Heart right ventricle (tissue), 16 donors: ENCODE measurements at regions of chr12 and their contacts with region 1.

Region 1: DNA sequence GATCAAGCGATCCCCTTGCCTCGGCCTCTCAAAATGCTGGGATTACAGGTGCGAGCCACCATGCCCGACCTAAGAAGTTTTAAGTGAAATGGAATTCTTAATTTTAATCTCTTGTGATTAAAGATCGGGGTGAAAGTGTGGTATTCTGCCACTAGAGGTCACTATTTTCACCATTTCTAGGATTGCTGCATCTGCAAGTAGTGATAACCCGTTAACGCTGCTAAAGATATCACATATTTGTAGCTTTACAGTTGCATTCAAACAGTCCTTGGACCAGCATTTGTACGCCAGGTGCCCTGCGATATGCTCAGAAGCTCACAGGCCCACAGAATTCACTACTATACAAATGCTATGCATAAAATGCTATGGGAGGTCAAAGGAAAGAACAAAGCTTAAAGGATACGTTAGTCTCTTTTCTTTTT is 19.3 kb downstream of the CCDC62 start:
- DNase-seq: no peak
- ATAC-seq: peak in 5 of 8 donors; percentile 44 to 63 (median 61)
- H3K4me3 ChIP-seq: no peak overlapping the region
- H3K27ac ChIP-seq: no peak overlapping the region
- H3K4me1 ChIP-seq: peaks cover 0 to 6% (median 0%) of the 10 kb centered on the region in 9 donors
- H3K27me3 ChIP-seq: no peaks in the 10 kb centered on the region
- CTCF ChIP-seq: peak; percentile 58 to 85 (median 74)

Region 2: GRCh38 chr12:122841544-122842321 is 48.0 kb after region 1 on chr12:
- intact Hi-C with region 1: loop called in 1 of 10 experiments (anchors 10 kb)
- DNase-seq: no peak
- ATAC-seq: peak; percentile 34 to 88 (median 75)
- H3K4me3 ChIP-seq: peak overlapping the region in 1 of 10 donors; percentile 6
- H3K27ac ChIP-seq: peak overlapping the region; percentile 77 to 98 (median 88)
- H3K4me1 ChIP-seq: peaks cover 6 to 64% (median 42%) of the 10 kb centered on the region in 9 donors
- H3K27me3 ChIP-seq: peaks cover 0 to 3% (median 0%) of the 10 kb centered on the region in 7 donors
- CTCF ChIP-seq: no peak

Region 3: GRCh38 chr12:122860346-122861090 is 66.8 kb after region 1 on chr12:
- intact Hi-C with region 1: loop called in 3 of 10 experiments (anchors 10 kb)
- DNase-seq: peak; percentile 87 to 90
- ATAC-seq: peak; percentile 59 to 87 (median 77)
- H3K4me3 ChIP-seq: no peak overlapping the region
- H3K27ac ChIP-seq: peak overlapping the region in 8 of 10 donors; percentile 45 to 76 (median 54)
- H3K4me1 ChIP-seq: peaks cover 3 to 54% (median 45%) of the 10 kb centered on the region in 9 donors
- H3K27me3 ChIP-seq: no peaks in the 10 kb centered on the region
- CTCF ChIP-seq: peak; percentile 84 to 95 (median 88)

Region 4: DNA sequence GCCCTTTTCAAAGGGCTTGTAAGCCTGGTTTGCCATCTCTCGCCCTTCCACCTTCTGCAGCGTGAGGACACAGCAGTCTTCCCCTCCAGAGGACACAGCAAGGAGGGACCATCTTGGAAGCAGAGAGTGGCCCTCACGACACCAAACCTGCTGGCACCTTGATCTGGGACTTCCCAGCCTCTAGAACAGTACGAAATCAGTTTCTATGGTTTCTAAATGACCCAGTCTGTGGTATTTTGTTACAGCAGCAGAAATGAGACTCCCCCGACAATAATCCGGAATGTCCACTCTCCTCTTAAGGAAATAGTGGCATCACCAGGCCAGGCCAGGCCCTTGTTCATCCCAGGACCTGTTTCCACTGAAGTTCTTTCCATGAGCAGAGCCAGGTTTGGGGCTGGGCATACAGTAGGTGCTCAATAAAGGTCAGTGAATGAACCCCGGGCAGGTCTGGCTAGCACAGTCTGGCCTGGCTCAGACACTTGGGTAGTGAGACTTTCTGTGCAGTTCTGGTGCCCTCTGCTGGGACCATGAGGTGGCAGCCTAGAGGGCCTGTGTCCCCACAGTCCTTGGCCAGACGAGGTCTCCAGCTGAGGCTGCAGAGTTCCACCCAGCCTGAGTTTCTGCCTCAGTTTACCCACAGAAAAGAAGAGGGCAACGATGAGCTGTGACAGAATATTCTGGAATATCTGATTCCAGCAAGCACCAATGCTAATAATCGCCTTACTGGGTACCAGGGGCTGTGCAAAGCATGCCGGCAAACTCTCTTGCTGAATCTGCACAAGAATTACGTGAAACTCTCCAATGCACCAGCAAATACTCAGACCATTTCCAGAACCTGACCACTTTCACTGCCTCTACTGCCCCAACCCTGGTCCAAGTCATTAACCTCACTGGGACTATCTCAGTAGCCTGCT is 158.5 kb after region 1 on chr12:
- intact Hi-C with region 1: loop called in 9 of 10 experiments (anchors 1 to 10 kb)
- DNase-seq: peak; percentile 73 to 78
- ATAC-seq: peak; percentile 91 to 95 (median 94)
- H3K4me3 ChIP-seq: no peak overlapping the region
- H3K27ac ChIP-seq: no peak overlapping the region
- H3K4me1 ChIP-seq: peaks cover 0 to 19% (median 10%) of the 10 kb centered on the region in 9 donors
- H3K27me3 ChIP-seq: no peaks in the 10 kb centered on the region
- CTCF ChIP-seq: peak; percentile 81 to 95 (median 91)